ENCODE measurements at regions of chr6 and their contacts with region 1.

Region 1: GRCh38 chr6:71444222-71444621 is 155.6 kb downstream of the OGFRL1 start:
- DNase-seq: no peak
- H3K4me3 Mint-ChIP-seq: peak overlapping the region; percentile 18
- H3K27ac Mint-ChIP-seq: no peak overlapping the region
- H3K4me1 Mint-ChIP-seq: no peaks in the 10 kb centered on the region
- H3K27me3 Mint-ChIP-seq: no peaks in the 10 kb centered on the region
- CTCF ChIP-seq: peak; percentile 18

Region 2: DNA sequence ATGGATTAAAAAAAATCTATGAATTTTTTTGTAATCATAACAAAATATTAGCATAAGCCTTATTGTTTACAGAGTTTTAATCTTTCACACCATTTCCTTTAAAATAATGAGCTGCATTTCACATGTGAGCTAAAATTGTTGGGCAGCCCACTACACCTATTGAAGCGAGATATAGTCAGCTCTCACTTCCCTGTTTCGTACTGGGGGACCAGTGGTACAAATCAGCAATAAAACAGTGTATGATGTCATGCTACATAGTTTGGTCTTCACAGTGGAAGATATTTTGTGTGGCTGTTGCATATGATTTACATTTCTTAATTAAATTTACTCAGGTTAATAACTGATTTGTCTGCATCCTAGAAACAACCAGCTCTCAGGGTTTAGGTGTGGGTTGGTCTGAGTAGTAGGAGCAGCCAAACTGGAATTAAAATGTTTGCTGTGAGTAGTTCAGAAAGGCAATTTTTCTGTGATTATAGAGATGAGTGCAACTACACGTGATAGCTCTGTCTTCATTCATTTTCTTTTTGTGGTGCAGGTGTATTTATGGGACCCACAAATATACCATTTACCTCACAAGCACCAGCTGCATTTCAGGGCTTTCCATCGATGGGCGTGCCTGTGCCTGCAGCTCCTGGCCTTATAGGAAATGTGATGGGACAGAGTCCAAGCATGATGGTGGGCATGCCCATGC is 586.7 kb before region 1 on chr6:
- CTCF ChIA-PET with region 1: no interaction called
- intact Hi-C with region 1: no loop called
- DNase-seq: no peak
- H3K4me3 Mint-ChIP-seq: no peak overlapping the region
- H3K27ac Mint-ChIP-seq: no peak overlapping the region
- H3K4me1 Mint-ChIP-seq: no peaks in the 10 kb centered on the region
- H3K27me3 Mint-ChIP-seq: no peaks in the 10 kb centered on the region
- CTCF ChIP-seq: no peak

Region 3: GRCh38 chr6:71375676-71376075 is 68.5 kb before region 1 on chr6:
- CTCF ChIA-PET with region 1: no interaction called
- intact Hi-C with region 1: loop called (anchors 2 kb)
- DNase-seq: peak; percentile 47
- H3K4me3 Mint-ChIP-seq: peak overlapping the region; percentile 20
- H3K27ac Mint-ChIP-seq: peak overlapping the region; percentile 74
- H3K4me1 Mint-ChIP-seq: peaks cover 53% of the 10 kb centered on the region
- H3K27me3 Mint-ChIP-seq: no peaks in the 10 kb centered on the region
- CTCF ChIP-seq: no peak

Region 4: GRCh38 chr6:71383901-71384489 is 60.2 kb before region 1 on chr6:
- CTCF ChIA-PET with region 1: interaction called, 7 read pairs
- intact Hi-C with region 1: loop called (anchors 1 kb)
- DNase-seq: peak; percentile 56
- H3K4me3 Mint-ChIP-seq: no peak overlapping the region
- H3K27ac Mint-ChIP-seq: peak overlapping the region; percentile 75
- H3K4me1 Mint-ChIP-seq: peaks cover 49% of the 10 kb centered on the region
- H3K27me3 Mint-ChIP-seq: no peaks in the 10 kb centered on the region
- CTCF ChIP-seq: peak; percentile 74

Region 5: DNA sequence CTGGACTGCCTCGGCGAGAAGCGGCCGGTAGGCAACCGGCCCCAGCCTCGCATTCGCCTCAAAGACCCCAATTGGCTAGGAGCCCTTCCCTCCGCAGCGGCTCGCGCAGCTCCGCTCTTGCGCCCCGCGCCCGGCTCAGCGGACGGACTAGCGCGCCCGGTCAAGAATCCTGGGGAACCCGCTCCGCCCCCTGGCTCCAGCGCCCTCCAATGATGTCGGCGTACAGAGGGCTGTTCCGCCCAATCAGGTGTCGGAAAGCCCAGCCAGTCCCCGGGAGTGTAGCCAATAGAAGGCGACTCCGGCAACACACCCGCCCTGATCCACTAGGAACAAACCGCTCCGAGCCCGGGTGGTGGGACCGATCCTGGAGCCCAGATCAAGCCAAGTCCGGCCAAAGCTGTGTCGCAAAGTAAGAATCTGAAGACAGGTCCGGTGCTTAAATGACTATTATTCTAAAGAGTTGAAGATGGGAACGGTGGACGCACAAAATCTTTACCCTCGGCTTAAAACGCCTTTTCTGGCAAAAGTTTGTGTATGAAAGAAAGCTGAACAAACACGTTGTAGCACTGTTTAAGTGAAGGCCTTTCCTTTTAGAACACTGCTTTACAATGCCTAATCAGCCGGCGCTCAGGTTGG is 23.4 kb before region 1 on chr6:
- CTCF ChIA-PET with region 1: interaction called, 4 read pairs
- intact Hi-C with region 1: loop called (anchors 2 kb)
- DNase-seq: peak; percentile 98
- H3K4me3 Mint-ChIP-seq: peak overlapping the region; percentile 81
- H3K27ac Mint-ChIP-seq: peak overlapping the region; percentile 85
- H3K4me1 Mint-ChIP-seq: peaks cover 14% of the 10 kb centered on the region
- H3K27me3 Mint-ChIP-seq: no peaks in the 10 kb centered on the region
- CTCF ChIP-seq: no peak